SK-N-SH (cell line): ENCODE measurements at regions of chr1 and their contacts with region 1.

Region 1: GRCh38 chr1:205977402-205978014 is 25.7 kb downstream of the RAB7B start:
- DNase-seq: peak; percentile 82
- H3K4me3 ChIP-seq: peak overlapping the region in 1 of 2 experiments; percentile 22; a peak in 1 of 4 replicates
- H3K27ac ChIP-seq: no peak overlapping the region
- H3K4me1 ChIP-seq: peaks cover 0 to 12% of the 10 kb centered on the region in 2 experiments; a peak in 1 of 4 replicates
- H3K27me3 ChIP-seq: no peaks in the 10 kb centered on the region
- CTCF ChIP-seq: peak; percentile 97
- EP300 ChIP-seq: no peak
- RAD21 ChIP-seq: peak; percentile 96

Region 2: GRCh38 chr1:205591522-205592351 is 385.8 kb before region 1 on chr1:
- CTCF ChIA-PET with region 1: interaction called, 10 read pairs
- POLR2A ChIA-PET with region 1: no interaction called
- DNase-seq: peak; percentile 87
- H3K4me3 ChIP-seq: peak overlapping the region; percentile 41 to 59
- H3K27ac ChIP-seq: peak overlapping the region in 1 of 2 experiments; percentile 36; a peak in 1 of 4 replicates
- H3K4me1 ChIP-seq: peaks cover 0 to 10% of the 10 kb centered on the region in 2 experiments; a peak in 1 of 4 replicates
- H3K27me3 ChIP-seq: no peaks in the 10 kb centered on the region
- CTCF ChIP-seq: peak; percentile 97
- EP300 ChIP-seq: no peak
- RAD21 ChIP-seq: peak; percentile 95

Region 3: DNA sequence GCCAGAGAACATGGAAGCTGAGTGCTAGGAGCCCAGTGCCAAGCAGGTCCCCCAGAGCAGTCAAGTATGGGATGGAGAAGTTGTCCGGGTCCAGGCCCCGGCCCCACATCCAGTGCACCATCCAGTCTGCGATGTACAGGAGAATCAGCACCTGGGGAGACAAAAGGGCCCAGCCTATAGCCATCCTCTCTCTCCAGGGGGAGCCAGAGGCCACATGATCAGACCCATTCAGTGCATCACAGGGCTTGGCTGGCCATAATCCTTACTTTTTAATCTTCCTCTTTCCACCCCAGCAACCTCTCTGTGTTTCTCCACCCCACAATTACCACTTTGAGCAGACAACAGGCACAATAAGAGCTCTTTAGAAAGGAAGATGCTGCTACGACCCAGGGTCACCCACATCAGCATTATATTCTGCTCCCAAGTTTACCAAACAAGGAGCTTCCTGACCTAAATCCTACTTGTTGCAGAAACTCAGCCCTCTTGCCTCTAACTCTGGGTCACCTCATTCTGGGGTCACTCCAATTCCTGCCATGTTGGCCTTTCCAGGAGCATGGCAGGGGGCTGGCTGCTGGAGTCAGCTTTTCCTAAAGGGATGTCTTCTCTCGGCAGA is 185.8 kb before region 1 on chr1:
- CTCF ChIA-PET with region 1: interaction called, 366 read pairs
- POLR2A ChIA-PET with region 1: interaction called, 8 read pairs
- DNase-seq: peak; percentile 82
- H3K4me3 ChIP-seq: no peak overlapping the region
- H3K27ac ChIP-seq: no peak overlapping the region; a peak in 1 of 4 replicates
- H3K4me1 ChIP-seq: peaks cover 0 to 3% of the 10 kb centered on the region in 2 experiments; a peak in 1 of 4 replicates
- H3K27me3 ChIP-seq: no peaks in the 10 kb centered on the region
- CTCF ChIP-seq: peak; percentile 86
- EP300 ChIP-seq: no peak
- RAD21 ChIP-seq: peak; percentile 94

Region 4: GRCh38 chr1:205843036-205843859 is 134.3 kb before region 1 on chr1:
- CTCF ChIA-PET with region 1: interaction called, 14 read pairs
- POLR2A ChIA-PET with region 1: no interaction called
- DNase-seq: no peak
- H3K4me3 ChIP-seq: no peak overlapping the region
- H3K27ac ChIP-seq: no peak overlapping the region
- H3K4me1 ChIP-seq: peaks cover 0 to 12% of the 10 kb centered on the region in 2 experiments; a peak in 1 of 4 replicates
- H3K27me3 ChIP-seq: no peaks in the 10 kb centered on the region
- CTCF ChIP-seq: no peak
- EP300 ChIP-seq: no peak
- RAD21 ChIP-seq: no peak

Region 5: GRCh38 chr1:205919026-205919746 is 58.3 kb before region 1 on chr1:
- CTCF ChIA-PET with region 1: interaction called, 271 read pairs
- POLR2A ChIA-PET with region 1: interaction called, 10 read pairs
- DNase-seq: peak; percentile 79
- H3K4me3 ChIP-seq: no peak overlapping the region; a peak in 1 of 4 replicates
- H3K27ac ChIP-seq: no peak overlapping the region
- H3K4me1 ChIP-seq: peaks cover 0 to 7% of the 10 kb centered on the region in 2 experiments; a peak in 1 of 4 replicates
- H3K27me3 ChIP-seq: no peaks in the 10 kb centered on the region
- CTCF ChIP-seq: peak; percentile 81
- EP300 ChIP-seq: no peak
- RAD21 ChIP-seq: peak; percentile 92

Region 6: DNA sequence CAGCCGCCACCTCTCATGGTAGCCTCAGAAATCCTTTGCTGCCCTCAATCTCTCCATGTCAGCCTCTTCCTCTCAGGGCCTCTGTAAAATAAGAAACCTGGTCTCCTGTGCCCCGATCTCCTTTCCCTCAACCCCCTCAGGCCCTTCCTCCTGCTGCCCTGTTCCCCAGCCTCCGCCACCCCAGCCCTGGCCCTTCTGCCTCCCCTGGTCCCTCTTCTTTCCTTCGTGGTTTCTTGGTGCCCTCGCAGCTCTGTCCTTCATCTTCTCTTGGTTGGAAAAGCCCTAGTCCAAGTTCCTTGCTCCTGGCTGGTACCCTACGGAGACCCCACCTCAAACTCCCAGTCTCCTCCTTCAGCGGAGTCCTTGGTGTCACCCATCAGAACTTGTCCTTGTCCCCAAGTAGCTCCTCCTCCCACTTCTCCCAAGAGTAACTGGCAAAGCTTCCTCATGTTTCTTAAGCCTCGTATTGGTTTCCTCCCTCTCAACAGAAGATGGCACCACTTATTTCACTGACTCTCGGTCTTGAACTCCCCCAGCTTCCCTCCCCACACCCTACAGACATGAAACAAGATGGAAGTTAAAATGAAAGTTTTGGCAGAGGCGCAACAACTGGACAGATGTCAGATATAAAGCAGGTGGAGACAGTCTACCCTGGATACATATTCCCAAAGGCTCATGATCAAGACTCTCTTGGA is 12.1 kb after region 1 on chr1:
- CTCF ChIA-PET with region 1: interaction called, 56 read pairs
- POLR2A ChIA-PET with region 1: no interaction called
- DNase-seq: no peak
- H3K4me3 ChIP-seq: no peak overlapping the region
- H3K27ac ChIP-seq: no peak overlapping the region
- H3K4me1 ChIP-seq: no peaks in the 10 kb centered on the region; a peak in 1 of 4 replicates
- H3K27me3 ChIP-seq: no peaks in the 10 kb centered on the region; the same call in 1 of the 2 replicates
- CTCF ChIP-seq: no peak
- EP300 ChIP-seq: no peak
- RAD21 ChIP-seq: no peak

Region 7: DNA sequence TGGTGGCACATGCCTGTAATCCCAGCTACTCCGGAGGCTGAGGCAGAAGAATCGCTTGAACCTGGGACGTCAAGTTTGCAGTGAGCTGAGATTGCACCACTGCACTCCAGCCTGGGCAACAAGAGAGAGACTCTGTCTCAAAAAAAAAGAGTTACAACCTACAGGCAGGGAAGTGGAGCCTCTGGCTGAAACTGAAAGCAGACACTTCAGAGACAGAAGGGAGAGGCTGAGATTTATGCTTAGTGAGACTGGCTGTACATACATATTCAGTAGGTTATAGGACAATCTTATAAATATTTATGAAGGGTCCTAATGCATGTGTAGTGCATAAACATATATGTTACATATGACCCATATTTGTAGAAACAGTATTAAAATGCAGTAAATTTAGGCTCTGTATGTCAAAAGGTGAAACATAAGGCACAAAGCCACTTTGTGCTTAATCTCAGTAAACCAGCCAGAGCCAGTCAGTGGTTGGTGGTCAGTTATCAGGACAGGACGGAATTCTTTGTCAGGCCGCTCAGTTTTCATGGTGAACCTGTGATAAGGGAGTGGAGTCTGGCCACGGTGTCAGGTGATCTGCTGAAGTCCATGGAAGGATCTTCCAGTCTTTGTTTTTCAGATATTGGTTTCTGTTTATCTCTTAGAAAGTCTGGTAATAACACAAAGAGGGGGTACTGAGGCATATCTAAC is 89.1 kb after region 1 on chr1:
- CTCF ChIA-PET with region 1: no interaction called
- POLR2A ChIA-PET with region 1: no interaction called
- DNase-seq: no peak
- H3K4me3 ChIP-seq: no peak overlapping the region
- H3K27ac ChIP-seq: no peak overlapping the region
- H3K4me1 ChIP-seq: no peaks in the 10 kb centered on the region; a peak in 1 of 4 replicates
- H3K27me3 ChIP-seq: peaks cover 17% of the 10 kb centered on the region
- CTCF ChIP-seq: no peak
- EP300 ChIP-seq: no peak
- RAD21 ChIP-seq: no peak

Region 8: DNA sequence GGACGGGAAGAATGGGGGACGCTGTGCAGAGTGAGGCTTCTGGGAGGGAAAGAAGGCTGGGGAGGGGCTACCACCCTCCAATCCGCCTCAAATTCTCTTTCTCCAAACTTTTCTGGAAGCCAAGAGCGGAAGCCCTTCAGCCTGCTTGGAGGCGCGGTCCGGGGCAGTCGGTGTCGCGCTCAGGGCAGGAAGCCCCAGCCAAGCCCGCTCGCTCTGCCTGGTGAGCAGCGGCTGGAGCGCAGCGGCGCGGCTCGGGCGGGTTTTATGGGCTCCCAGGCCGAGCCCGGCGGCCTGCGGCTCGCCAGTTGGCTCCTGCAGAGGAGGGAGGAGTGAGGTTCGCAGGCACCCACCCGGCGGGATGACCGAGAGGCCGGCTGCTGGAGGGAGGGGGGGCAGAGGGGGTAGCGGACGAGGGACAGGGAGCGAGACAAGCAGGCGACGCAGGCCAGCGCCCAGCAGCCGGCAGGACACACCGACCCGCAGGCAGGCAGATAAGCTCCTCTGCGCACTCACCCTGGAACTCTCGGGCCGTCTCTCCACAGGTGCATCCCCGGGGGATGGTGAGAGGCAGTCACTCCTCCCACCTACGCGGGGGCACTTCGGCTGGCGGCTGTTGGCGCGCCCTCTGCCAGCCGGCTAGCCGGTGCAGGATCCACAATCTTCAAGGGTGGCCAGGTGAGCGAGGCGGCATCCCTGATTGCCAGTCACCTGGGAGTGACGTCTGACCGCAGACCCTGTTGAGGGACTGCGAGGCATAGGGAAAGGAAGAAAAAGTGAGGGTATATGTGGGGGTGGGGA is 139.8 kb after region 1 on chr1 and contains the start of gene AVPR1B:
- CTCF ChIA-PET with region 1: interaction called, 11 read pairs
- POLR2A ChIA-PET with region 1: no interaction called
- DNase-seq: peak; percentile 87
- H3K4me3 ChIP-seq: peak within 1 kb of the TSS; percentile 41 to 57
- H3K27ac ChIP-seq: no peak within 1 kb of the TSS
- H3K4me1 ChIP-seq: peaks cover 0 to 10% of the 10 kb centered on the region in 2 experiments; a peak in 1 of 4 replicates
- H3K27me3 ChIP-seq: peaks cover 34% of the 10 kb centered on the region
- CTCF ChIP-seq: 0 out of 2 replicates have a peak, but pooled peaks have one; percentile 8
- EP300 ChIP-seq: no peak
- RAD21 ChIP-seq: no peak
- polyA plus RNA-seq, gene AVPR1B: not detected in 2 replicates